CD8-positive, alpha-beta T cell (primary cell): ENCODE measurements at regions of chr17 and their contacts with region 1.

Region 1: GRCh38 chr17:40536295-40537171 is 28.7 kb downstream of the CCR7 start:
- DNase-seq: peak in 1 of 9 experiments; percentile 38
- ATAC-seq: no peak
- H3K4me3 ChIP-seq: no peak overlapping the region
- H3K4me3 Mint-ChIP-seq: no peak overlapping the region
- H3K27ac ChIP-seq: no peak overlapping the region
- H3K27ac Mint-ChIP-seq: peak overlapping the region; percentile 85
- H3K4me1 ChIP-seq: peaks cover 88% of the 10 kb centered on the region
- H3K4me1 Mint-ChIP-seq: peaks cover 96% of the 10 kb centered on the region
- H3K27me3 ChIP-seq: no peaks in the 10 kb centered on the region
- H3K27me3 Mint-ChIP-seq: no peaks in the 10 kb centered on the region
- CTCF ChIP-seq: no peak

Region 2: DNA sequence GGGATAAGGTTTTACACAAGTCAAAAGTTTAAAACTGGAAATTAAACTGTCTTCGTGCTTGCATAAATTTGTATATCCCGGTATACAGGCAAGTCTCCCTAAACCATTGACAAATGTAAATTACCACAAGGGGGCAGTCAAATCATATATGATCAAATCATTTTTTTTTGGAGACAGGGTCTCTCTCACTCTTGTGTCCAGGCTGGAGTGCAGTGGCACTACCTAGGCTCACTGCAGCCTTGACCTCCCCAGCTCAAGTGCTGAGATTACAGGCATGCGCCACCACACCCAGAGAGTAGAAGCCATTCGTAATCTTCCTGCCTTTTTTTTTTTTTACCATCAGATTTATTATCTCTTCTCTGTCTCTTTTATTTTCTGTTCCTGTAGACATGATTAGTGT is 137.3 kb before region 1 on chr17:
- CTCF ChIA-PET with region 1: interaction called, 43 read pairs
- POLR2A ChIA-PET with region 1: interaction called, 4 read pairs
- intact Hi-C with region 1: loop called (anchors 1 kb)
- DNase-seq: peak in 2 of 9 experiments; percentile 71 to 78
- ATAC-seq: peak; percentile 55
- H3K4me3 ChIP-seq: no peak overlapping the region
- H3K4me3 Mint-ChIP-seq: no peak overlapping the region
- H3K27ac ChIP-seq: no peak overlapping the region
- H3K27ac Mint-ChIP-seq: no peak overlapping the region
- H3K4me1 ChIP-seq: no peaks in the 10 kb centered on the region
- H3K4me1 Mint-ChIP-seq: peaks cover 16% of the 10 kb centered on the region
- H3K27me3 ChIP-seq: no peaks in the 10 kb centered on the region
- H3K27me3 Mint-ChIP-seq: no peaks in the 10 kb centered on the region
- CTCF ChIP-seq: peak; percentile 74

Region 3: DNA sequence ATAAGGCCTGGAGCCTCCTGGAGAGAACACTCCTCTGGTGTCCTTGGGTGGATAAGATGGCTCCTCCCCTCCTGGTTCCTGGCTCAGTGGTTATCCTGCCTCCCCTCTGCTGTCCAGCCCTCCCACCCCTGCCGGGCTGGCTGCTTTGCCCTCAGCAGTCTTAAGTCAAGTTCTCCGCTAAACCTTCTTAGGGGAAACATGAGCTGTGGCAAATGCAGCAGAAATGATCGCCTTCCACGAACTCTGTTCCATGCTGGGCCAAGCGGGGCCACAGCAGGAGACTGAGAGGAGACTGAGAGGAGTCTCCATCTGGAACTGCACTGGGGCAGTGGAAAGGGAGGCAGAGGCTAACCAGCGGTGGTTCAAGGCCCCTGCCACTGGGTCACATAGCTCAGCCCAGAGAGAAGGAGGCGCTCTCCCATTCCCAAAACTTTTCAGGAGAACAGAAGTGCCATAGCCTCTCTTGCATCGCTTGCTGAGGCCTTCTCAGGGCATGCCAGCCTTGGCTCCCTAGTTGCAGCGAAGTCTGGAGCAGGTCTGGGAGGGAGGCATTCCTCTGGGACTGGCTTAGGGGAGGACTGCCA is 62.0 kb before region 1 on chr17:
- CTCF ChIA-PET with region 1: interaction called, 60 read pairs
- POLR2A ChIA-PET with region 1: interaction called, 5 read pairs
- intact Hi-C with region 1: loop called (anchors 1 kb)
- DNase-seq: no peak
- ATAC-seq: no peak
- H3K4me3 ChIP-seq: no peak overlapping the region
- H3K4me3 Mint-ChIP-seq: no peak overlapping the region
- H3K27ac ChIP-seq: no peak overlapping the region
- H3K27ac Mint-ChIP-seq: no peak overlapping the region
- H3K4me1 ChIP-seq: peaks cover 11% of the 10 kb centered on the region
- H3K4me1 Mint-ChIP-seq: peaks cover 10% of the 10 kb centered on the region
- H3K27me3 ChIP-seq: no peaks in the 10 kb centered on the region
- H3K27me3 Mint-ChIP-seq: no peaks in the 10 kb centered on the region
- CTCF ChIP-seq: no peak